ENCODE measurements at regions of chr9 and their contacts with region 1.

Region 1: DNA sequence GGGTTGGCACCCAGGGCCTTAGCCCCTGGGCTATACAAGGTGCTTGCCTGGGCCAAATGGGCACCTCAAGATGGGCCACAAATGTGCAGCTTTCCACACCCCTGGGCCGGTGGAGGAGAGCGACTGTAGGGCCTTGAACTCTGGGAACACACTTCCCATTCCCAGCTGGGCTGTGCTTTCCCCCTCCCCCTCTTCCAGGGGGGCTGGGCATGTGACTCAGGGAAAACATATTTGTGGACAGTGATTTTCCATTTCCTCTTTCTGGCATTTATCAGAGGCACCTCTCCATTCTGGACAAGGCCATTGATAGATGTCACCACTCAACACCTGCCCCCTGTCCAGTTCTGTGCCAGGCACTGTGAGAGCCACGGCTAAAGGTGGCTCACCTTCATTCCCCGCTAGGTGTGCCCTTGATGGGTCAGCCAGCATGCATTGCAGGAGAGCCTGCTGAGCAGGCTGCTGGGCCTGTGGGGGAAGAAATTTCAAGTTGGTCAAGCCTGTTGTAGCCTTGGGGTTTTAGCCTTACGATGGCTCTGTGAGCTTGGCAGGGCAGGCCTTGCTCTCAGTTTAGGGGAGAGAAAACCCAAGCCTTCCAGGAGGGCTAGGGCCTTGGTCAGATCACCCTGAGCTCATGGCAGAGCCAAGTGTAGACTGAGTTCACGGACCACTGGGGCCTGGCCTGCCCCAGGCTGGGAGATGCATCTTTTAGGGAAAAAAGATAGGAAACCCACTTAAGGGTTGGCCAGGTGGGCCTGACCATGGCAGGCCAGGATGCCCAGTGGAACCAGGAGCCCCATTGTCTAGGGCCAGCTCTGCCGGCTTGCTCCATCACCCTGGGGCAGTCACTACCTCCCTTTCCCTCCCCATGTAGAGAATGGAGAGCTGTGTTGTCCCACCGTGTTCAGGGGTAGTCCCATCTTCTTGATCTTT is 113.9 kb downstream of the DAB2IP start:
- DNase-seq: peak; percentile 61 to 66
- ATAC-seq: peak; percentile 20 to 86 (median 52)
- H3K4me3 ChIP-seq: no peak overlapping the region
- H3K27ac ChIP-seq: peak overlapping the region; percentile 50
- H3K4me1 ChIP-seq: peaks cover 13% of the 10 kb centered on the region
- H3K27me3 ChIP-seq: no peaks in the 10 kb centered on the region
- CTCF ChIP-seq: no peak

Region 2: GRCh38 chr9:121662891-121663580 is 102.2 kb before region 1 on chr9:
- intact Hi-C with region 1: no loop called
- DNase-seq: peak in 1 of 2 donors; percentile 34
- ATAC-seq: peak in 3 of 4 donors; percentile 8 to 17 (median 9)
- H3K4me3 ChIP-seq: no peak overlapping the region
- H3K27ac ChIP-seq: no peak overlapping the region
- H3K4me1 ChIP-seq: peaks cover 36% of the 10 kb centered on the region
- H3K27me3 ChIP-seq: no peaks in the 10 kb centered on the region
- CTCF ChIP-seq: no peak

Region 3: GRCh38 chr9:121744002-121744686 is 21.1 kb before region 1 on chr9:
- intact Hi-C with region 1: loop called in 1 of 2 experiments (anchors 2 kb)
- DNase-seq: peak; percentile 65 to 74
- ATAC-seq: peak; percentile 60 to 78 (median 68)
- H3K4me3 ChIP-seq: peak overlapping the region; percentile 62
- H3K27ac ChIP-seq: peak overlapping the region; percentile 87
- H3K4me1 ChIP-seq: peaks cover 89% of the 10 kb centered on the region
- H3K27me3 ChIP-seq: no peaks in the 10 kb centered on the region
- CTCF ChIP-seq: peak; percentile 60